Common myeloid progenitor, CD34-positive (primary cell): ENCODE measurements at regions of chr5 and their contacts with region 1.

Region 1: DNA sequence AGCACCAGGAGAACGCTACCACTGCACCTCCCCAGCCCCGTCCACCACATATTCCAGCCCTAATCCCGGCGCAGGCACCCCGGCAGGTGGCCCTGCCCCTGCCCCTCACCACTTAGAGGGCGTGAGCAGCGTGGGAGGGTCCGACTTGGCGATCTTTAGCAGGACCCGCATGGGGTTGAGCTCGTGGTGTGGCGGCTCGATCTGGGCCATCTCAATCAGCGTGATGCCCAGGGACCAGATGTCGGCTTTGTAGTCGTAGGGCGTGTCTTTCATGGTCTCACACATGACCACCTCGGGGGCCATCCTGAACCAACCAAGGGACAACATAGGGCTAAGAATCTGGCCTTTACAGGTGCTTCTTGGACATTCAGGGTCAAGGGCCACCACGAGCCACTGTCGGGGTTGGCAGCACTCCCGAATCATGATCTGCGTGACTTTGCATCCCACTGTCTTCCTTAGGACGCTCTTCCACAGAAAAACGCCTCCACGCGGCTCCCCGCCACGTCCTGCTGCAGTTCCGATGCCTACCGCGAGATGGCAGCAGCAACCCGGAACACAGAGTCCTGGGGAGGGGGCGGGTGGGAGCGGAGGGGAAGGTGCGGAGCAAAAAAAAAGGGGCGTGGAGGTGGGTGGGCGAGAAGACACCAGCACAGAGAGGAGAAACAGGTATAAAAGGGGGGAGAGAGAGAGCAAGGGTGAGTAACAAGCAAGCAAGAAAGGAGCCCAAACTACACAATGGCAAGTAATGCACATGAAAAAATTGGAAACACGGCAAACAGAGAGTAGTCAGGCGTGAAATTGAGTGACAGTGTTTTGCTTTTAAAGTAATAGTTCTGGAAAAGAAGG is 81.3 kb downstream of the STK10 start:
- DNase-seq: peak; percentile 56 to 62 (median 58)
- H3K4me3 ChIP-seq: peak overlapping the region in 3 of 7 experiments; percentile 30 to 33 (median 32)
- H3K27ac ChIP-seq: no peak overlapping the region
- H3K4me1 ChIP-seq: peaks cover 13 to 52% (median 45%) of the 10 kb centered on the region in 4 experiments
- H3K27me3 ChIP-seq: no peaks in the 10 kb centered on the region

Region 2: DNA sequence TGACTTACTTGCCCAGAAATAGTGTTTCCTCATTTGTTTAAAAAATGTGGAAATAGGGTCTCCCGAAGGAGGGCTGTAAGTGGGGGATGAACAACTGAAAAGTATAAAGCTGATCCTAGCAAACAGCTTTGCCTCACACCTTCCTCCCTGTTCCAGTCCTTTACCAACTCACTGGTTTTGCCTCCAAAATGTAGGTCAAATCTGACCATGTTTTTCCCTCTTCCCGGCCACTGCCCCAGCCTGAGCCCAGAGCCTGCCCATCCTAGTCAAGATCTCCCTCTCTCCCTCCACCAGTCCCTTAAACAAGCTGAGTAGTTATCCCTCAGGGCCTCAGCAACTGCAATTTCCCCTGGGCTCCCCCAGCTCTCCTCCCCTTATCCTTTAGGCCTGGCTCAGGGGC is 17.9 kb before region 1 on chr5:
- CTCF ChIA-PET with region 1: no interaction called
- POLR2A ChIA-PET with region 1: no interaction called
- DNase-seq: no peak
- H3K4me3 ChIP-seq: no peak overlapping the region
- H3K27ac ChIP-seq: no peak overlapping the region
- H3K4me1 ChIP-seq: no peaks in the 10 kb centered on the region
- H3K27me3 ChIP-seq: no peaks in the 10 kb centered on the region

Region 3: GRCh38 chr5:172129256-172129910 is 22.6 kb after region 1 on chr5:
- CTCF ChIA-PET with region 1: interaction called, 14 read pairs
- POLR2A ChIA-PET with region 1: no interaction called
- DNase-seq: no peak
- H3K4me3 ChIP-seq: no peak overlapping the region
- H3K27ac ChIP-seq: no peak overlapping the region
- H3K4me1 ChIP-seq: peaks cover 8 to 45% (median 21%) of the 10 kb centered on the region in 4 experiments
- H3K27me3 ChIP-seq: no peaks in the 10 kb centered on the region

Region 4: DNA sequence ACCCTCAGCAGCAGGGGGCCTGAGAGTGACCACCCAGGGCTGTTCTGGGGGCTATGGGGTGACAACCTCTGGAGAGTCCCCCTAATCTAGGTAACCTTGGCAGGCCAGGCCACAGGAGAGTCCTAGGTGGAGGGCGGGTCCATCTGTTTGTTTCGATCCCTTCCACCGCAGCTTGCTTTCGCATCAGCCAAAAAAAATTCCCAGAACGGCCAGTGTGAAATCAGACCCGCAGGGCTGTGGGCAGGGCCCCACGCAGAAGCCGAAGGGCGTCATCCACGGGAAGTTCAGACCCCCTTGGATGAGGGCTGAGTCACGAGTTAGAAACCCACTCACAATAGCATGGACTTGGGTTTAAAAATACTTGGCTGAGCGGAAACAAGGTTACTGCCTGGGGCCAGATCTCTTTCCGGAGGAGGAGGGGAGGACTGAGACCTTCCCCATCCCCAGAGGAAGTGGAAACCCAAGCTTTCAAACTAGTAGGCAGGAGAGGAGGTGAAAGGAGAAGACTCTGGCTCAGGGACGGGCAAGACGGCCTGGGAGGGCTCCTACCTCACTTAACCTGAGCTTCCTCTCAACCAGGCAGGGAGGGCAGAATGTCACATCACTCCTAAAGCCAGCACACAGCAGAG is 72.7 kb after region 1 on chr5:
- CTCF ChIA-PET with region 1: interaction called, 63 read pairs
- POLR2A ChIA-PET with region 1: interaction called, 17 read pairs
- DNase-seq: peak; percentile 85 to 89 (median 87)
- H3K4me3 ChIP-seq: peak overlapping the region in 6 of 7 experiments; percentile 19 to 71 (median 54)
- H3K27ac ChIP-seq: peak overlapping the region; percentile 77 to 88
- H3K4me1 ChIP-seq: peaks cover 38 to 95% (median 81%) of the 10 kb centered on the region in 4 experiments
- H3K27me3 ChIP-seq: no peaks in the 10 kb centered on the region

Region 5: GRCh38 chr5:172293054-172293744 is 186.5 kb after region 1 on chr5:
- CTCF ChIA-PET with region 1: interaction called, 10 read pairs
- POLR2A ChIA-PET with region 1: no interaction called
- DNase-seq: peak; percentile 67 to 86 (median 84)
- H3K4me3 ChIP-seq: peak overlapping the region in 1 of 7 experiments; percentile 48
- H3K27ac ChIP-seq: no peak overlapping the region
- H3K4me1 ChIP-seq: peaks cover 0 to 7% (median 5%) of the 10 kb centered on the region in 4 experiments
- H3K27me3 ChIP-seq: no peaks in the 10 kb centered on the region